PC-9 (cell line): ENCODE measurements at regions of chr15 and their contacts with region 1.

Region 1: DNA sequence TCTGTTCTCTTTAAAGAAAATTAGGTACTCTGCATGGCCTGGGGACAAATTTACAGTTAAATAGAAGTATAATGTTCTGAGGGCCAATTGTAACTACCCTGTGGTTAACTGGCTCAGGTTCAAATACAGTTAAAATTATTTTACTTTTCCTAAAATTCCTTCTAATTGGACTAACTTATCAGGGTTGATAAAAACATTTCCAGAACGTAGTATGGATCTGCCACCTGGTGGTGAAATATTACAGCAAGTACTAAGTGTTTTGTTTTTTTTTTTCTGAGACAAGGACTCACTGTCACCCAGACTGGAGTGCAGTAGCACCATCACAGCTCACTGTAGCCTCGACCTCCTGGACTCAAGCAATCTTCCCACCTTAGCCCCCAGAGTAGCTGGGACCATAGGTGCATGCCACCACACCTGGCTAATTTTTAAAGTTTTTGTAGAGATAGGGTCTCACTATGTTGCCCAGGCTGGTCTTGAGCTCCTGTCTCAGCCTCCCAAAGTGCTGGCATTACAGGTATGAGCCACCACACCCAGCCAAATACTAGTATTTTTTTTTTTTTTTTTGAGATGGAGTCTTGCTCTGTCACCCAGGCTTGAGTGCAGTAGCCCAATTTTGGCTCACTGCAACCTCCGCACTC is 29.2 kb downstream of the NEO1 start:
- DNase-seq: peak in 1 of 2 experiments; percentile 37
- H3K4me3 ChIP-seq: no peak overlapping the region
- H3K27ac ChIP-seq: no peak overlapping the region
- H3K4me1 ChIP-seq: no peaks in the 10 kb centered on the region
- H3K27me3 ChIP-seq: no peaks in the 10 kb centered on the region
- CTCF ChIP-seq: peak; percentile 78

Region 2: GRCh38 chr15:72312605-72313447 is 768.6 kb before region 1 on chr15:
- CTCF ChIA-PET with region 1: no interaction called
- POLR2A ChIA-PET with region 1: no interaction called
- intact Hi-C with region 1: loop called (anchors 5 kb)
- DNase-seq: peak; percentile 59 to 61
- H3K4me3 ChIP-seq: no peak overlapping the region
- H3K27ac ChIP-seq: no peak overlapping the region
- H3K4me1 ChIP-seq: no peaks in the 10 kb centered on the region
- H3K27me3 ChIP-seq: 0 out of 2 replicates have a peak, but pooled peaks cover 5% of the 10 kb centered on the region
- CTCF ChIP-seq: peak; percentile 80

Region 3: DNA sequence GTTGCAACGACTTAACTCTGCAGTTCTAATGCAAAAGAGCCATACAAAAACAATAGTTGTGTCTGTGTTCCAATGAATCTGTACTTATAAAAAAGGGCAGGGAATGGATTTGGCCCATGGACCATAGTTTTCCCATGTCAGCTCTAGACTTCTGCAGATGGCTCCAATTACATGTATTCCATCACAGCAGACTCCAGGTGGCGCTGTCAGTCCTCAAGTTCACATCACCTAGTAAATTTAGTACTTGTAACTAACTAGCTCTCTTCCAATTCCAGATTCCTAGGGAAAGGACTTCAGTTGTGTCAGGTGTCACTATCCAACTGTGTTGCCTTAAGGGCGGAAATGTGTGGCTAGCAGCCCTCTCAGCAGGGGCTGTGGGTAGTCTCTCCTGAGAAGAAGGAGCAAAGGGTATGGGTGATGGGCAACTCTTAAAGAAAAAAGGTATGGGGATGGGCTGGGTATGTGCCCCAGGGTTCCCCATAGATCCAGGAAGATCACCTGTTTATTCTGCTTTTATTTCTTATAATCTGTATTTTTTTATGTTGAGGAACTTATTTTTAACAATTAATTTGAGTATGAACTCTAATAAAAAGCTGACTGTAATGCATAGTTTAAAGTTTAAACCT is 359.3 kb before region 1 on chr15:
- CTCF ChIA-PET with region 1: no interaction called
- POLR2A ChIA-PET with region 1: no interaction called
- intact Hi-C with region 1: loop called (anchors 1 kb)
- DNase-seq: peak; percentile 44 to 53
- H3K4me3 ChIP-seq: no peak overlapping the region
- H3K27ac ChIP-seq: no peak overlapping the region
- H3K4me1 ChIP-seq: no peaks in the 10 kb centered on the region
- H3K27me3 ChIP-seq: no peaks in the 10 kb centered on the region
- CTCF ChIP-seq: peak; percentile 86

Region 4: DNA sequence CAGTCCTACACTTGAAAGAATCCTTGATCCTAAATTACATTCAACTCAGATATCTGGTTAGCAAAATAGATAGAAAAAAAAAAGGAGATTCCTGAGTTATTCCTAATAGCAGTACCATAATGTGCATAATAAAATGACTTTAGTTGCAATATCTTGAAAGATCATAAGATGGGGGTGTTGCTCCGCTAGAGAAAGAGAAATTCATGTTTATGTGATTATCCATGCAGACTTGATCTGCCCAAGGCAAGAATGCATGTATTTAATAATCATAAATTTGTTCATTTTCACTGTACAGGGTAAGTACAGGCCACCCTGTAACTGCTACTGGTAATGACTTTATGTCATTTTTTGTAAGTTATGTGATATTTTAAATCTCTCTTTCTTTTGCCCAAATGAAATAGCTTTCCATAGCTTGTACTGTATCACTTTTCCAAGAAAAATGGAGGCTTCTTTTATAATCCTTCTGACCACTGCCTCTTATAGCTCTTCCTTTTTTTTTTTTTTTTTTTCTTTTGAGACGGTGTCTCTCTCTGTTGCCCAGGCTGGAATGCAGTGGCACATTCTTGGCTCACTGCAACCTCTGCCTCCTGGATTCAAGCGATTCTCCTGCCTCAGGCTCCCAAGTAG is 202.8 kb after region 1 on chr15:
- CTCF ChIA-PET with region 1: no interaction called
- POLR2A ChIA-PET with region 1: no interaction called
- intact Hi-C with region 1: no loop called
- DNase-seq: no peak
- H3K4me3 ChIP-seq: no peak overlapping the region
- H3K27ac ChIP-seq: no peak overlapping the region
- H3K4me1 ChIP-seq: no peaks in the 10 kb centered on the region
- H3K27me3 ChIP-seq: no peaks in the 10 kb centered on the region
- CTCF ChIP-seq: peak; percentile 62